ENCODE measurements at regions of chr9 and their contacts with region 1.

Region 1: GRCh38 chr9:115883457-115884329 is 269.9 kb upstream of the PAPPA start:
- DNase-seq: no peak
- ATAC-seq: peak in 3 of 4 donors; percentile 51 to 72 (median 69)
- H3K4me3 ChIP-seq: no peak overlapping the region
- H3K27ac ChIP-seq: no peak overlapping the region
- H3K4me1 ChIP-seq: no peaks in the 10 kb centered on the region
- H3K27me3 ChIP-seq: peaks cover 0 to 2% (median 0%) of the 10 kb centered on the region in 3 donors
- CTCF ChIP-seq: peak; percentile 57

Region 2: GRCh38 chr9:115930509-115930908 is 46.8 kb after region 1 on chr9:
- intact Hi-C with region 1: no loop called
- DNase-seq: no peak
- ATAC-seq: no peak
- H3K4me3 ChIP-seq: no peak overlapping the region
- H3K27ac ChIP-seq: no peak overlapping the region
- H3K4me1 ChIP-seq: no peaks in the 10 kb centered on the region
- H3K27me3 ChIP-seq: no peaks in the 10 kb centered on the region
- CTCF ChIP-seq: no peak

Region 3: GRCh38 chr9:116000748-116001329 is 117.1 kb after region 1 on chr9:
- intact Hi-C with region 1: loop called in 1 of 2 experiments (anchors 10 kb)
- DNase-seq: no peak
- ATAC-seq: peak; percentile 42 to 72 (median 60)
- H3K4me3 ChIP-seq: no peak overlapping the region
- H3K27ac ChIP-seq: no peak overlapping the region
- H3K4me1 ChIP-seq: peaks cover 21% of the 10 kb centered on the region
- H3K27me3 ChIP-seq: no peaks in the 10 kb centered on the region
- CTCF ChIP-seq: peak; percentile 47

Region 4: GRCh38 chr9:116124461-116125090 is 240.9 kb after region 1 on chr9:
- intact Hi-C with region 1: loop called in 1 of 2 experiments (anchors 10 kb)
- DNase-seq: no peak
- ATAC-seq: no peak
- H3K4me3 ChIP-seq: no peak overlapping the region
- H3K27ac ChIP-seq: no peak overlapping the region
- H3K4me1 ChIP-seq: no peaks in the 10 kb centered on the region
- H3K27me3 ChIP-seq: no peaks in the 10 kb centered on the region
- CTCF ChIP-seq: no peak

Region 5: GRCh38 chr9:116572095-116572748 is 688.5 kb after region 1 on chr9:
- intact Hi-C with region 1: loop called in 1 of 2 experiments (anchors 10 kb)
- DNase-seq: peak; percentile 90 to 95
- ATAC-seq: peak; percentile 97 to 100 (median 98)
- H3K4me3 ChIP-seq: no peak overlapping the region
- H3K27ac ChIP-seq: no peak overlapping the region
- H3K4me1 ChIP-seq: no peaks in the 10 kb centered on the region
- H3K27me3 ChIP-seq: no peaks in the 10 kb centered on the region
- CTCF ChIP-seq: peak; percentile 86

Region 6: DNA sequence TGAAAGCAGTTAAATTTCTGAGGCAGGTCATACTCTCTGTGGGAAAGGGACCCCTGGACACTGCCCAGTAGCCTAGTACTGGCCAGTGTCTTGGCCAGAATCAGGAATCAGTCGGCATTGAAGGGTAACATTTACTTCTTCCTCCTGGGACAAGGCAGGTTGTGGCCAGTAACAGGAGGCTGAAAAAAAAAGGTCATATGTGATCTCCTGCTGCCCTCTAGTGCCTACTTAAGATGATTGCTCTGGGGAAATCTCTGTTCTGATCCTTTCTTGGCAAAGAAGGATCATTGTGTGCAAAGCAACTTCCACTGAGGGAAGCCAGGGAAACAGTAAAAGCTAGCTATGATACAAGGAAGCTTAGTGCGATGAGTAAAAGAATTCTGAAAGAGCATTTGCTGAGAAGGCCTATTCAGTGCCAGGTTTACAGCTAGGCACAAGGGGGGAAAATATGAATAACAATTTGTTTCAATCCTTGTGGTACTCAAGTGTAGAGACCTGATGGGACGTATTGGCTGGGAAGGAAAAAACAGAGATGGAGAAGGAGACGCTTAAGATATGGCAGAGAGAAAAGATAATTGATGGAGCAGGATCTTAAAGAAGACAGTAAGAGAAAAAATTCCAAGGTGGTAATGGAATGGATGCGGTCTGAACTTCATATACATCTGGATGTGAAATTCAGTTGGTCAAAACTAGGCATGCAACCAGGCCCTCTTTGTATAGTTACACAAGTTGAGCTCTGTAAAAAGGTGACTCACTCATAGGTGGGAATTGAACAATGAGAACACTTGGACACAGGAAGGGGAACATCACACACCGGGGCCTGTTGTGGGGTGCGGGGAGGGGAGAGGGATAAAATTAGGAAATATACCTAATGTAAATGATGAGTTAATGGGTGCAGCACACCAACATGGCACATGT is 777.6 kb after region 1 on chr9:
- intact Hi-C with region 1: loop called (anchors 5 to 10 kb)
- DNase-seq: no peak
- ATAC-seq: peak; percentile 78 to 95 (median 90)
- H3K4me3 ChIP-seq: no peak overlapping the region
- H3K27ac ChIP-seq: no peak overlapping the region
- H3K4me1 ChIP-seq: peaks cover 10% of the 10 kb centered on the region
- H3K27me3 ChIP-seq: no peaks in the 10 kb centered on the region
- CTCF ChIP-seq: peak; percentile 78